ENCODE measurements at regions of chr4 and their contacts with region 1.

Region 1: DNA sequence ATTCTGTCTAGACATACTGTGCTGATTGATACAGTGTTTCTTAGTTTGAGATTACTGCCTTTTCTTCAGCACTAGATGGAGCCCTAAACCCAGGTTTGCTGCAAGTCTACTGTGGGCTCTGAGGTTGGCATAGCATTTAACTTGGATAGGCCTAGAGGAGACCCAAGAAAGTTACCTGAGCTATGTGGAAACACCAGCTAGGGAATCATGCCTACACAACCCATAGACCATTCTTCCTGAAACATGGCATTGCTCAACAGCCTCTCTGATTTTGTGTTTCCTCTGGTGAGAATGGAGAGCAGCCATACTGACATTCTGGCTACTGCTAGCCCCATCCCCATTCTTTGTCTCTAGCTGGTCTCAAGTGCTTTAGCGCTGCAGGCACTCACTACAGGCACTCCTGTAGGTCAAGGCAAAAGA is 287.7 kb upstream of the PCDH18 start:
- DNase-seq: peak; percentile 54
- H3K4me3 ChIP-seq: no peak overlapping the region
- H3K27ac ChIP-seq: no peak overlapping the region
- H3K4me1 ChIP-seq: no peaks in the 10 kb centered on the region
- CTCF ChIP-seq: peak; percentile 90

Region 2: DNA sequence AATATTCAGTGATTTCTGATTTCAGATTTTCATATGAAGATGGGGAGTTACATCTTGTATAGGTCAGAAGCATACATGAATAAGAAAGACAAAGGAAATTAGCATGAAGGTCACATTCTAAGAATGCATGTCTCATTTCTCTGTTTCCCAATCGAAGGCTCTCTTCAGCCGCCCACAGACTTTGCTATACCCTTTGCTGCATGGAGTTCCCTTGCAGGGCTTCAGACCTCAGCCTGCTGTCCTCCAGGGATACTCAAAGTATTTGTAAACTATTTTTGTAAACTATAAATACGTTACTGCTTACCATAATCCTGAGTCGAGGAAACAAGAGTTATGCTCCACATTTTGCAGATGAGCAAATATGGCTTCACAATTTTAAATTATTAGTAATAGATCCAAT is 1026.1 kb before region 1 on chr4:
- CTCF ChIA-PET with region 1: no interaction called
- POLR2A ChIA-PET with region 1: no interaction called
- intact Hi-C with region 1: no loop called
- DNase-seq: no peak
- H3K4me3 ChIP-seq: no peak overlapping the region
- H3K27ac ChIP-seq: no peak overlapping the region
- H3K4me1 ChIP-seq: no peaks in the 10 kb centered on the region
- CTCF ChIP-seq: no peak

Region 3: DNA sequence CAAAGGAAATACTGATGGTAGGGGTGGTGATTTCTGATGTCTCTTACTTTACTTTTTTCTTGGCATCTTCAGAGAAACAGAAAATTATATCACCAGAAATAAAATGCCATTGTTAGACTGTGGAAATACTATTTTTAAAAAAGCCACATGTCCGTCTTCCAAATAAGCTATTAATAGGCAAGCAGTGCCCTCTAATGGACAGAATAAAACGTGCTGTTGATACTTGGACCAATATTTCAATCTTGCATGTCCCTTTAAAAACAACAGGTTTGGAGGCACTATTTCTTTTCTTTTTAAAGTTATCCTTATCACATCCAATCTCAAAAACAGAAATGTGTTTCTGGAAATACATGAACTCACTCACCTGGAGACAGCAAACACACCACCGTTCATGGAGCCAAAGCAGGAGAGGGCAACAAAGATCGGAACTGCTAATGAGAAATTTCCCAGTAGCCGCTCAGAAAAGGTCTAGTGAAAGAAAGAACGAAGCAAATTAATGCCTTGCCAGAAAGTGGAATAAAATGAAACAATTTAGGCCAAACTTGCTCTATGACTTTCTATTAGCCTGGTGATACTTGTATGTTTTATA is 363.0 kb after region 1 on chr4:
- CTCF ChIA-PET with region 1: no interaction called
- POLR2A ChIA-PET with region 1: no interaction called
- intact Hi-C with region 1: loop called (anchors 2 kb)
- DNase-seq: peak; percentile 60
- H3K4me3 ChIP-seq: no peak overlapping the region
- H3K27ac ChIP-seq: no peak overlapping the region
- H3K4me1 ChIP-seq: peaks cover 6% of the 10 kb centered on the region
- CTCF ChIP-seq: peak; percentile 86

Region 4: GRCh38 chr4:138522366-138522765 is 702.4 kb after region 1 on chr4:
- CTCF ChIA-PET with region 1: no interaction called
- POLR2A ChIA-PET with region 1: no interaction called
- intact Hi-C with region 1: loop called (anchors 5 kb)
- DNase-seq: peak; percentile 38
- H3K4me3 ChIP-seq: no peak overlapping the region
- H3K27ac ChIP-seq: no peak overlapping the region
- H3K4me1 ChIP-seq: no peaks in the 10 kb centered on the region
- CTCF ChIP-seq: peak; percentile 75

Region 5: DNA sequence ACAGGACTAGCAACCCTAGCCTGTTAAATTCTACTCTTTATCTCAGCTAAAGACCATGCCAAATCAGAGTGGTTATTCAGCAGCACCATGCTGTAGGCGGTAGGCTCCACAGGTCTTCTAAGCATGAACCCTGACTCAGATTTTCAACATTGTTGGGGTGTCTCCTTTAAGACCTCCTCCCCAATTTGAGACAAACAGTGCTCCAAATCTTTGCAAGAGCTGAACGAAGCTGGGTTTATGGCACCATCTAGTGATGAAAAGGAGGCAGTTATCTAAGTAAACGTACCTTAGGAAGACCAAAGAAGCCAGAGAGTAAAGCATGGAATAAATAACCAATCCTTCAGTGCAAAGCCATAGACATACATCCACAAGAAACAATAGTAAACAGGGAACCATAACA is 756.7 kb after region 1 on chr4:
- CTCF ChIA-PET with region 1: no interaction called
- POLR2A ChIA-PET with region 1: no interaction called
- intact Hi-C with region 1: loop called (anchors 5 kb)
- DNase-seq: peak; percentile 24
- H3K4me3 ChIP-seq: no peak overlapping the region
- H3K27ac ChIP-seq: no peak overlapping the region
- H3K4me1 ChIP-seq: no peaks in the 10 kb centered on the region
- CTCF ChIP-seq: peak; percentile 67

Region 6: GRCh38 chr4:138680989-138681604 is 861.1 kb after region 1 on chr4:
- CTCF ChIA-PET with region 1: no interaction called
- POLR2A ChIA-PET with region 1: no interaction called
- intact Hi-C with region 1: loop called (anchors 1 kb)
- DNase-seq: peak; percentile 76
- H3K4me3 ChIP-seq: no peak overlapping the region
- H3K27ac ChIP-seq: no peak overlapping the region
- H3K4me1 ChIP-seq: no peaks in the 10 kb centered on the region
- CTCF ChIP-seq: peak; percentile 99

Region 7: DNA sequence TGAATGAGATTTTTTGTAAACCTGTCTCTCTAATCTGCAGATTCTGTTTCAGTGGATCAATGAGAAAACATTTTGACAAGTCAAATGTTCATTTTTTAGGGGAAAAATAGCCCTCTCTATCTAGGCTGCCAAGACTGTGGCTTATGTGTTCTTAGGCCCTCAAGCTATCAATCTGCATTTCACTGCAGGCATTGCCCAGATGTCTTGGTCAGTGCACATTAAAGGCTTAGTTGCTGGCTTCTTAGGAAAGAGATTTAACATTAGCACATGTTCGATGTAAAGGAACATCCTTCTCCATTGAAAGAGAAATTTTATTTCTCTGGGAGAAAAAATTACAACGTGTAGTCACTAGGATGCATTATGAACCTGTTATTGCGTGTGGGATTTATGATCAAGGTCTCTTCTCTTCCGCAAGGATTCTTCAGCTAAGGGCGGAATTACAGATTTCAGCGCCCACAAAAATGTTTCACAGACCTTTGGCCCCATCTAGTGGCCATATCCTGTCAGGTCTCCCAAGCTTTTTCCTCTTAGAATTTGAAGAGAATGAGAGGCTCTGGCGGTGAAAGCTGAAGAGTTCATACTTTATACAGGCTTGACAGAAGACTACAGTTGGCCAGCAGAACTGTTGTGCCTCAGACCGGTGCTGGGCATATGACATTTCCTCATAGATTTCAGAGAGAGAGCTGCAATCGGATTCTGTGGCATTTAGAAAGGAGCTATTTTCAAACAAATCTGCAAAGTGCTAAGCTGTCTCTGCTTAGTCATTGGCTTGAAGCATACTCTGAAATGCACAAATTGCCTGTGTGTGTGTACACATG is 1051.0 kb after region 1 on chr4:
- CTCF ChIA-PET with region 1: no interaction called
- POLR2A ChIA-PET with region 1: no interaction called
- intact Hi-C with region 1: loop called (anchors 10 kb)
- DNase-seq: peak; percentile 60
- H3K4me3 ChIP-seq: no peak overlapping the region
- H3K27ac ChIP-seq: no peak overlapping the region
- H3K4me1 ChIP-seq: no peaks in the 10 kb centered on the region
- CTCF ChIP-seq: peak; percentile 92